ENCODE measurements at regions of chr6 and their contacts with region 1.

Region 1: GRCh38 chr6:82178077-82178758 is 69.3 kb downstream of the IBTK start:
- DNase-seq: peak; percentile 74
- H3K4me3 ChIP-seq: no peak overlapping the region
- H3K27ac ChIP-seq: no peak overlapping the region
- H3K4me1 ChIP-seq: peaks cover 48% of the 10 kb centered on the region
- H3K27me3 ChIP-seq: no peaks in the 10 kb centered on the region
- CTCF ChIP-seq: peak; percentile 78

Region 2: GRCh38 chr6:80903711-80904110 is 1274.5 kb before region 1 on chr6:
- CTCF ChIA-PET with region 1: no interaction called
- POLR2A ChIA-PET with region 1: no interaction called
- intact Hi-C with region 1: no loop called
- DNase-seq: no peak
- H3K4me3 ChIP-seq: no peak overlapping the region
- H3K27ac ChIP-seq: no peak overlapping the region
- H3K4me1 ChIP-seq: no peaks in the 10 kb centered on the region
- H3K27me3 ChIP-seq: no peaks in the 10 kb centered on the region
- CTCF ChIP-seq: no peak

Region 3: DNA sequence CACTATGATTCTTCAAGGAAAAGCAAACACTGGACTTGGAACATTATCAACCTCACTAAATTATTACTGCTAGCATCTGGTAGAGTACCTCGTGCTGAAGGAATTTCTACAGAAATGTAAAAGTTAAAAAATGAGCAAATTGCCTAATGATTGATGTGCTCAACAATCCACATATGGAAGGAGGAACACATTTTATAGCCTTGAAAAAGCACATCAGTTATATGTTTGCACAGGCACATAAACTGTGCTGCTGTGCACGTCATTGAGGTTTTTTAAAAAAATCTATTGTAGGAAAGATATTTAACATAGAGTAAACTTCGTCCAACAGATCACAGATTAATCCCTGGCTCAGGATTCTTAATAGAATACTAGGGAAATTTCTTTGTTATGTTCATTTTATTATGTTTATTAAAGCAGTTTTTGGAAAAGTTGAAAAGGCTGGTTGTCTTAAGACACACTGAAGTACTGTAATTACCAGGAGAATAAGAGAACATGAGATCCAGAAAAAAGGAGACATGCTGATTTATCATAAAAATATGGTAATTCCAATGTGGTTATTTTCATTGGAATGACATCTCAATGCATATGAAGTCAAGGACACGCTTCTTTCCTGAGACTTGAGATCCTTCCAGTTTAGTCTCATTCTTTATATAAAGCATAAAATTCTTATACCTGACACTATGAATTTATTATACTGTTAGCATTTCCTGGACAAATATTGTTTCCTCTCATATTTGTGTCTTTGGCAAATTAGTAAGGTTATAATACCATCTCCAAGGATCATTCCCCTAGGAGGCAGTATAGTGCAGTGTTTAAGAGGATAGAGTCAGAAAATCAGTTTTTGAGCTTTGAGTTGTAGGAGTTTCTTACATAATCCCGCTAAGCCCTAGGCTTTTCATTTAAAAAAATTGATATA is 936.8 kb before region 1 on chr6:
- CTCF ChIA-PET with region 1: no interaction called
- POLR2A ChIA-PET with region 1: no interaction called
- intact Hi-C with region 1: loop called (anchors 5 kb)
- DNase-seq: peak; percentile 73
- H3K4me3 ChIP-seq: no peak overlapping the region
- H3K27ac ChIP-seq: no peak overlapping the region
- H3K4me1 ChIP-seq: no peaks in the 10 kb centered on the region
- H3K27me3 ChIP-seq: no peaks in the 10 kb centered on the region
- CTCF ChIP-seq: peak; percentile 67

Region 4: DNA sequence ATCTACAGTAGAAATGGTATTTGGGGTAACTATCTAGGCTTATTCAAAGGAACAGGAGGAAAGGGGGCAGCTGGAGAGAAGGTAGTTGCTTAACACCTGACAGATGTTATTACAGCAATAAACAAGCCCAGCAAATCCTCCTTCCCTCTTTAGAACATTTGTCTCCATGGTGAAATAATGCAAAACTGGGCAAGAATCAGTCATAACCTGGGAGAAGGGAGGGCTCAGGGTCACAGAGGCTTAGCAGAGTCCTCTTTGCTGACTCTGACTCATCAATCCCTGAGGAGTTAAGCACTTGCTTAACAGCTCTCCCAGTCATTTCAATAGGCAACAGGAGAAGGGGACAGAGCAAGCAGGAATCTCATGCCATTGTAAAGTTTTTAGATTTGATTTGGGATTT is 160.9 kb before region 1 on chr6:
- CTCF ChIA-PET with region 1: no interaction called
- POLR2A ChIA-PET with region 1: no interaction called
- intact Hi-C with region 1: loop called (anchors 10 kb)
- DNase-seq: peak; percentile 62
- H3K4me3 ChIP-seq: no peak overlapping the region
- H3K27ac ChIP-seq: no peak overlapping the region
- H3K4me1 ChIP-seq: no peaks in the 10 kb centered on the region
- H3K27me3 ChIP-seq: no peaks in the 10 kb centered on the region
- CTCF ChIP-seq: no peak

Region 5: GRCh38 chr6:82080767-82081166 is 97.5 kb before region 1 on chr6:
- CTCF ChIA-PET with region 1: interaction called, 4 read pairs
- POLR2A ChIA-PET with region 1: no interaction called
- intact Hi-C with region 1: loop called (anchors 5 kb)
- DNase-seq: no peak
- H3K4me3 ChIP-seq: no peak overlapping the region
- H3K27ac ChIP-seq: no peak overlapping the region
- H3K4me1 ChIP-seq: peaks cover 46% of the 10 kb centered on the region
- H3K27me3 ChIP-seq: no peaks in the 10 kb centered on the region
- CTCF ChIP-seq: no peak

Region 6: GRCh38 chr6:82227770-82228169 is 49.6 kb after region 1 on chr6:
- CTCF ChIA-PET with region 1: no interaction called
- POLR2A ChIA-PET with region 1: no interaction called
- intact Hi-C with region 1: no loop called
- DNase-seq: no peak
- H3K4me3 ChIP-seq: no peak overlapping the region
- H3K27ac ChIP-seq: no peak overlapping the region
- H3K4me1 ChIP-seq: peaks cover 8% of the 10 kb centered on the region
- H3K27me3 ChIP-seq: no peaks in the 10 kb centered on the region
- CTCF ChIP-seq: no peak

Region 7: GRCh38 chr6:83132121-83132520 is 953.9 kb after region 1 on chr6:
- CTCF ChIA-PET with region 1: no interaction called
- POLR2A ChIA-PET with region 1: no interaction called
- intact Hi-C with region 1: no loop called
- DNase-seq: no peak
- H3K4me3 ChIP-seq: no peak overlapping the region
- H3K27ac ChIP-seq: no peak overlapping the region
- H3K4me1 ChIP-seq: no peaks in the 10 kb centered on the region
- H3K27me3 ChIP-seq: no peaks in the 10 kb centered on the region
- CTCF ChIP-seq: no peak

Measured in A673 (cell line).